H1 (cell line): ENCODE measurements at regions of chr2 and their contacts with region 1.

Region 1: DNA sequence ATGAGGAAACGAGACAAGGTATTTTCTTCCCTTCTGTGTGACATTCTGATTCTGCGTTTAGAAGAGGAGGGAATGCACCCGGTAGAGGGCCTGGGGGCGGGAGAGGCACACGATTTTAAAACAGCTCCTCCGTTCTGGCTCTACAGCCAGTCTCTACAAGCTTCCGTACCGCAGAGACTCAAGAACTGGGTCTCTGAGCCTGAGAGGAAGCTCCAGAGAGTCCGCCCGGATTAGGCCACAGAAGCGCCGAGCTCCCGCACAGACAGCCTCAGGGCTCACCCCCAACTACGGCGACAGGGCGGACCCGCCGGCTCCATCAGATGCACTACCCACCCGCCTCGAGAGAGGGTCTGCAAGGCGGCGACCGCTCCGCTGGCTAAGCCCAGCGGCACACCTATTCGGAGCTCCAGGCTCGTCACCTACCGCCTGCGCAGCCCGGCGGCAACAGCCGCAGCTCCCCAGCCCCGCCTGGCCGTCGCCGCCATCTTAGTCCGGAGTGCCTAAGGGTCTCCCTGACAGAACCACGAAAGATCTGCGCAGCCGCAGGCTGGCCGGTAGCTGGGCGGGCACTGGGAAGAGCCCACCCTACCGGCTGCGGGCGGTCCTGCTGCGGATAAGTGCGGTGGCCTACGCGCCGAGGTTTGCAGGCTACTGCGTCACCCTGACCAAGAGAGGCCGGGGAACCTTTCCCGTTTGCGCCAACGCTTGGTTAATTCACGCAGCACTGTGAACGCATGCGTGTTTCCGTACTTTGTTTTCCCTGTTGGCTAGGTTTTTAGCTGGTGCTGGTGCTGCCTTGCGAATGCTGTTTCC is at the start of gene NFU1:
- DNase-seq: peak; percentile 85 to 92
- H3K4me3 ChIP-seq: peak within 1 kb of the TSS; percentile 65 to 89 (median 79)
- H3K27ac ChIP-seq: peak within 1 kb of the TSS; percentile 82
- H3K4me1 ChIP-seq: peaks cover 4 to 5% (median 4%) of the 10 kb centered on the region in 4 experiments
- H3K27me3 ChIP-seq: no peaks in the 10 kb centered on the region
- CTCF ChIP-seq: peak; percentile 47 to 77 (median 71)
- EP300 ChIP-seq: no peak
- POLR2A ChIP-seq: peak in 1 of 2 experiments; percentile 93; a peak in 2 of 3 replicates
- RAD21 ChIP-seq: peak; percentile 32 to 42
- total RNA-seq, gene NFU1: 43.4 and 45.5 TPM in 2 replicates

Region 2: DNA sequence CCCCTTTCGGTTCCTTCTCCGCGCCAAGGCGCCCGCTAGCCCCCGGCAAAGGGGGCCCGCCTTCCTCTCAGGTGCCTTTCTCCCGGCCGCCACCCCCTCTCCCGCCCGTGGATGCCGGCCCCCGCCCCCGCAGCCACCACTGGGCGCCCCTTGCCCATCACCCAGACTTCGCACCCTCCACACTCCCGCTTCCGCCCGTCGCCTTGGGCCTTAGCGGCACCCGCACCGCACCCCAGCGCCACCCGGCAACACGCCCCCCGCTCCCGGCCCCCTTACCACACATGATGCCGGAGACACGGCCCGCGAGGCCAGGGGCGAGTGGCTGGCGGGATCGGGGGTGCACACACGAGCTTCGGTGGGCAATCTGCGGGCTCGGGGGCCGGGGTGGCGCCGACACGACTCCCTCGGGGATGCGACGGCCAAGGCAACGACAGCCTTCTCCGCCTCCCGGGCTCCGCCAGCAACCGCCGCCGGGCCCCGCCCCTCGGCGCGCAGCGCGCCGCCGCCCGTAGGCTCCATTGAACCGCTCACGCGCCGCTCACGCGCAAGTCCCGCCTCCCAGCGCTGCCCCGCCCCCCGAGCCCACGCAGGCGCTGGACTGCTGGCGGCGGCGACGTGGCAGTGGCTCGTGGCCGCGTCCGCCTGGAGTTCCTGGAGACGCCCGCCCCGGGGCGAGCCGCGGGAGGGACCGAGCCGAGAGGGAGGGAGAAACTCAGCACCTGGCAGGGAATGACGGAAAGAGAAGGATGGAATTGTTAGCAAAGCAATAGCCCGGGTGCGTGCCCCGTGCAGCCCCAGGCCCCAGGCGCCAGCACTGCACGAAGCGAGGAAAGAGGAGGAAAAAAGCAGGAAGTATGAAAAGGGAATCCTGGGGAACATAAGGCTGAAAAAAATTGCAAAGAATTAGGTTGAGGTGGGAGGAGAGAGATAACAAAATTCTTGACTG is 50.1 kb before region 1 on chr2 and contains the start of gene GFPT1:
- CTCF ChIA-PET with region 1: interaction called, 5 read pairs
- POLR2A ChIA-PET with region 1: interaction called, 10 read pairs
- DNase-seq: peak; percentile 64 to 93
- H3K4me3 ChIP-seq: peak within 1 kb of the TSS; percentile 65 to 77 (median 70)
- H3K27ac ChIP-seq: no peak within 1 kb of the TSS
- H3K4me1 ChIP-seq: peaks cover 0 to 5% (median 0%) of the 10 kb centered on the region in 4 experiments; a peak in 3 of 7 replicates
- H3K27me3 ChIP-seq: no peaks in the 10 kb centered on the region
- CTCF ChIP-seq: no peak
- EP300 ChIP-seq: no peak
- POLR2A ChIP-seq: peak in 1 of 2 experiments; percentile 69; a peak in 2 of 3 replicates
- RAD21 ChIP-seq: no peak
- total RNA-seq, gene GFPT1: 76.2 and 86.8 TPM in 2 replicates